Activated CD8-positive, alpha-beta T cell treated with anti-CD3 and anti-CD28 coated beads for 36 hours (primary cell): ENCODE measurements at regions of chr1 and their contacts with region 1.

Region 1: GRCh38 chr1:171741872-171742576 is at the start of gene VAMP4:
- DNase-seq: peak; percentile 90
- ATAC-seq: peak; percentile 90
- H3K4me3 Mint-ChIP-seq: peak within 1 kb of the TSS; percentile 97
- H3K27ac Mint-ChIP-seq: peak within 1 kb of the TSS; percentile 100
- H3K4me1 Mint-ChIP-seq: peaks cover 46% of the 10 kb centered on the region
- H3K27me3 Mint-ChIP-seq: no peaks in the 10 kb centered on the region
- CTCF ChIP-seq: no peak
- total RNA-seq, gene VAMP4: 6.1 to 6.2 TPM

Region 2: DNA sequence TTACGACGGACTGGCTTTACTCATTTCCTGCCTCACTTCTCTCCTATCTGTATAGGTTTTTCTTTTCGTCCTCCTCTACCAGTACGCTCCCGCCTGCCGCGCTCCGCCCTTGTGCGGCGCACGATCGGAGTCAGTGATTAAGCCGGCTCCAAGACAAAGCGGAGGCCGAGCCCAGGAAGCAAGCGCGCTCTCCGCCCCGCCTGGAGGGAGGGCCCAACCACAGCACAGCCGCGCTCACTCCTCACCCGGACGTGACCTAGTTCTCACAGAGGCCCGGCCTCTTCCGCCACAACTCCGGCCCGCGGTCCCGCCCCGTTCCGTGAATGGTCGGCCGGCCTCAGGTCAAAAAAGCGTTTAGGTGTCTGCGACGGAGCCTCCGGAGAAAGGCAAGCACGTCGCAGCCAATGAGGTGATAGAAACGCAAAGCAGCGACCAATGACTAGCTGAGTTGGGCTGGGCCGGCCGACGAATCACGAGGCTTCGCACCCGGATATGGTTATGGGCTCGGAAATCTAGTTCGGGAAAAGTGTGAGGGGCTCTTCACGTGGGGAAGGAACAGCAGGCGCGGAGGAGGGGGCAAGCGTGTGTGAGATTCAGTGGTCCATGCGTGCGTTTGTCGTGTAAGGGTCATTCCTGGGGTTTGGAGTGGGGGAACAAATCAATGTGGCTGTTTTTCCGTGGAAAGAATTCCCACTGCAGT is 39.3 kb after region 1 on chr1 and contains the start of gene METTL13:
- CTCF ChIA-PET with region 1: interaction called, 5 read pairs
- POLR2A ChIA-PET with region 1: interaction called, 22 read pairs
- intact Hi-C with region 1: loop called (anchors 1 kb)
- DNase-seq: peak; percentile 99
- ATAC-seq: peak; percentile 96
- H3K4me3 Mint-ChIP-seq: peak within 1 kb of the TSS; percentile 94
- H3K27ac Mint-ChIP-seq: peak within 1 kb of the TSS; percentile 95
- H3K4me1 Mint-ChIP-seq: peaks cover 45% of the 10 kb centered on the region
- H3K27me3 Mint-ChIP-seq: no peaks in the 10 kb centered on the region
- CTCF ChIP-seq: no peak
- total RNA-seq, gene METTL13: 44.6 to 46.6 TPM